ENCODE measurements at regions of chr17 and their contacts with region 1.

Region 1: GRCh38 chr17:35764123-35764991 is 3.7 kb downstream of the C17orf50 start:
- DNase-seq: peak; percentile 77 to 86 (median 84)
- H3K4me3 ChIP-seq: peak overlapping the region; percentile 70
- H3K4me3 Mint-ChIP-seq: peak overlapping the region; percentile 88 to 99 (median 96)
- H3K27ac ChIP-seq: peak overlapping the region; percentile 17
- H3K27ac Mint-ChIP-seq: peak overlapping the region; percentile 65 to 96 (median 86)
- H3K4me1 ChIP-seq: peaks cover 8% of the 10 kb centered on the region
- H3K4me1 Mint-ChIP-seq: peaks cover 7 to 9% (median 9%) of the 10 kb centered on the region in 3 donors
- H3K27me3 ChIP-seq: no peaks in the 10 kb centered on the region
- H3K27me3 Mint-ChIP-seq: no peaks in the 10 kb centered on the region

Region 2: GRCh38 chr17:35448214-35448898 is 316.0 kb before region 1 on chr17 and contains the start of gene SLFN13:
- CTCF ChIA-PET with region 1: no interaction called
- POLR2A ChIA-PET with region 1: no interaction called
- DNase-seq: peak; percentile 69 to 89 (median 80)
- H3K4me3 ChIP-seq: peak within 1 kb of the TSS; percentile 61
- H3K4me3 Mint-ChIP-seq: peak within 1 kb of the TSS; percentile 73 to 96 (median 88)
- H3K27ac ChIP-seq: peak within 1 kb of the TSS; percentile 41
- H3K27ac Mint-ChIP-seq: peak within 1 kb of the TSS; percentile 74 to 96 (median 90)
- H3K4me1 ChIP-seq: peaks cover 13% of the 10 kb centered on the region
- H3K4me1 Mint-ChIP-seq: peaks cover 14 to 28% (median 25%) of the 10 kb centered on the region in 3 donors
- H3K27me3 ChIP-seq: no peaks in the 10 kb centered on the region
- H3K27me3 Mint-ChIP-seq: no peaks in the 10 kb centered on the region
- total RNA-seq, gene SLFN13: 23.0 to 24.4 TPM

Region 3: GRCh38 chr17:35747540-35748017 is 16.8 kb before region 1 on chr17:
- CTCF ChIA-PET with region 1: interaction called, 42 read pairs
- POLR2A ChIA-PET with region 1: no interaction called
- DNase-seq: peak; percentile 64 to 83 (median 71)
- H3K4me3 ChIP-seq: no peak overlapping the region
- H3K4me3 Mint-ChIP-seq: no peak overlapping the region
- H3K27ac ChIP-seq: no peak overlapping the region
- H3K27ac Mint-ChIP-seq: peak overlapping the region in 1 of 8 donors; percentile 77
- H3K4me1 ChIP-seq: peaks cover 6% of the 10 kb centered on the region
- H3K4me1 Mint-ChIP-seq: peaks cover 4 to 18% (median 5%) of the 10 kb centered on the region in 3 donors
- H3K27me3 ChIP-seq: peaks cover 40% of the 10 kb centered on the region
- H3K27me3 Mint-ChIP-seq: peaks cover 49 to 58% of the 10 kb centered on the region in 2 donors

Region 4: GRCh38 chr17:35780951-35781350 is 16.6 kb after region 1 on chr17:
- CTCF ChIA-PET with region 1: interaction called, 25 read pairs
- POLR2A ChIA-PET with region 1: interaction called, 7 read pairs
- DNase-seq: no peak
- H3K4me3 ChIP-seq: no peak overlapping the region
- H3K4me3 Mint-ChIP-seq: no peak overlapping the region
- H3K27ac ChIP-seq: no peak overlapping the region
- H3K27ac Mint-ChIP-seq: no peak overlapping the region
- H3K4me1 ChIP-seq: no peaks in the 10 kb centered on the region
- H3K4me1 Mint-ChIP-seq: no peaks in the 10 kb centered on the region
- H3K27me3 ChIP-seq: no peaks in the 10 kb centered on the region
- H3K27me3 Mint-ChIP-seq: peaks cover 6 to 37% of the 10 kb centered on the region in 2 donors

Region 5: GRCh38 chr17:35788504-35789368 is 24.4 kb after region 1 on chr17:
- CTCF ChIA-PET with region 1: interaction called, 13 read pairs
- POLR2A ChIA-PET with region 1: no interaction called
- DNase-seq: no peak
- H3K4me3 ChIP-seq: peak overlapping the region; percentile 17
- H3K4me3 Mint-ChIP-seq: no peak overlapping the region
- H3K27ac ChIP-seq: no peak overlapping the region
- H3K27ac Mint-ChIP-seq: no peak overlapping the region
- H3K4me1 ChIP-seq: peaks cover 14% of the 10 kb centered on the region
- H3K4me1 Mint-ChIP-seq: no peaks in the 10 kb centered on the region
- H3K27me3 ChIP-seq: peaks cover 7% of the 10 kb centered on the region
- H3K27me3 Mint-ChIP-seq: peaks cover 12 to 21% of the 10 kb centered on the region in 2 donors

Region 6: DNA sequence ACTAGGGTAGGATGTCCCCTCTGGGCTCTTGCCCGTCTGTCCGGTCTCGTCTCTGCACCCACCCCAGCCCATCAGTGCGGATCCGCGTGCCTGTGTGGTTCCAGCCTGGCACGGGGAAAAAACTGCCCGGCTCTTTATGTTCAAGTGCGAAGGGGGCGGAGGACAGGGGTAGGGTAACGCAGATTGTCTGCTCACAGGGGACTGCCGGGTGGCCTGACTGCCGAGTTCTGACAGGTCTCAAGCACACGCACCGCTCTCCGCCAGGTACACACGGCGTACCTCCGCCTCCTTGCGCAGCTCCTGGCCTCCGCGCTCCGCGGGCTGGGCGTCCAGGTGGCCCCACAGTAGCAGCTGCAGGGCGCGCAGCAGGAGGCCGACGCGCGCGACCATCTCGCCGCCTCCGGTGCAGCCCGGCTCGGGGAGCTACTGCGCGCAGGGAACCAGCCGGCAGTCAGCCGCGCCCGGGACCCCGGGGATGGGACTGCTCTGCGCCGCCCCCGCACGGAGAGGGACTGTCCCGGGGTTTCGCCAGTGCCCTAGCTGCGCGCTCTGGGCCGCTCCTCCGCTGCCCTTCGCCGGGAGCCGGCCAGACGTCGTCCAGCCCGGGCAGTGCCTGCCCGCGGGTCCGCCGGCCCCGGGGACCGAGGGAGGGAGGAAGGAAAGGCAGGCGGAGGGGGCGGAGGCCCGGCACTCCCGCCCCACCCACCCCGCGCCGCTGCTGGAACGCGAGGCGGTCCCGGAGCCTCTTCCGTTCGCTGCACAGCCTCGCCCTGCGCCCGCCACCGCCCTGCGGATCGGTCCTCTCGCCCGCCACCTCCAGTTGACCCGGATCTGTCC is 30.8 kb after region 1 on chr17 and contains the start of gene MMP28:
- CTCF ChIA-PET with region 1: interaction called, 22 read pairs
- POLR2A ChIA-PET with region 1: interaction called, 3 read pairs
- DNase-seq: peak in 4 of 5 donors; percentile 1 to 57 (median 14)
- H3K4me3 ChIP-seq: peak within 1 kb of the TSS; percentile 58
- H3K4me3 Mint-ChIP-seq: peak within 1 kb of the TSS; percentile 55 to 87 (median 77)
- H3K27ac ChIP-seq: no peak within 1 kb of the TSS
- H3K27ac Mint-ChIP-seq: peak within 1 kb of the TSS in 1 of 8 donors; percentile 68
- H3K4me1 ChIP-seq: peaks cover 10% of the 10 kb centered on the region
- H3K4me1 Mint-ChIP-seq: peaks cover 5 to 17% (median 8%) of the 10 kb centered on the region in 3 donors
- H3K27me3 ChIP-seq: peaks cover 29% of the 10 kb centered on the region
- H3K27me3 Mint-ChIP-seq: peaks cover 39 to 65% of the 10 kb centered on the region in 2 donors
- total RNA-seq, gene MMP28: not detected

Region 7: GRCh38 chr17:35808962-35809854 is 44.9 kb after region 1 on chr17 and contains the start of gene TAF15:
- CTCF ChIA-PET with region 1: interaction called, 250 read pairs
- POLR2A ChIA-PET with region 1: interaction called, 66 read pairs
- DNase-seq: peak; percentile 94 to 97 (median 97)
- H3K4me3 ChIP-seq: peak within 1 kb of the TSS; percentile 83
- H3K4me3 Mint-ChIP-seq: peak within 1 kb of the TSS; percentile 90 to 99 (median 97)
- H3K27ac ChIP-seq: peak within 1 kb of the TSS; percentile 83
- H3K27ac Mint-ChIP-seq: peak within 1 kb of the TSS; percentile 90 to 99 (median 97)
- H3K4me1 ChIP-seq: peaks cover 44% of the 10 kb centered on the region
- H3K4me1 Mint-ChIP-seq: peaks cover 49 to 59% (median 49%) of the 10 kb centered on the region in 3 donors
- H3K27me3 ChIP-seq: no peaks in the 10 kb centered on the region
- H3K27me3 Mint-ChIP-seq: no peaks in the 10 kb centered on the region
- total RNA-seq, gene TAF15: 274 to 291 TPM

Region 8: GRCh38 chr17:35931794-35932425 is 167.6 kb after region 1 on chr17:
- CTCF ChIA-PET with region 1: no interaction called
- POLR2A ChIA-PET with region 1: no interaction called
- DNase-seq: no peak
- H3K4me3 ChIP-seq: no peak overlapping the region
- H3K4me3 Mint-ChIP-seq: peak overlapping the region in 1 of 7 donors; percentile 47
- H3K27ac ChIP-seq: no peak overlapping the region
- H3K27ac Mint-ChIP-seq: peak overlapping the region in 1 of 8 donors; percentile 58
- H3K4me1 ChIP-seq: peaks cover 6% of the 10 kb centered on the region
- H3K4me1 Mint-ChIP-seq: peaks cover 22 to 31% (median 26%) of the 10 kb centered on the region in 3 donors
- H3K27me3 ChIP-seq: no peaks in the 10 kb centered on the region
- H3K27me3 Mint-ChIP-seq: no peaks in the 10 kb centered on the region

Region 9: DNA sequence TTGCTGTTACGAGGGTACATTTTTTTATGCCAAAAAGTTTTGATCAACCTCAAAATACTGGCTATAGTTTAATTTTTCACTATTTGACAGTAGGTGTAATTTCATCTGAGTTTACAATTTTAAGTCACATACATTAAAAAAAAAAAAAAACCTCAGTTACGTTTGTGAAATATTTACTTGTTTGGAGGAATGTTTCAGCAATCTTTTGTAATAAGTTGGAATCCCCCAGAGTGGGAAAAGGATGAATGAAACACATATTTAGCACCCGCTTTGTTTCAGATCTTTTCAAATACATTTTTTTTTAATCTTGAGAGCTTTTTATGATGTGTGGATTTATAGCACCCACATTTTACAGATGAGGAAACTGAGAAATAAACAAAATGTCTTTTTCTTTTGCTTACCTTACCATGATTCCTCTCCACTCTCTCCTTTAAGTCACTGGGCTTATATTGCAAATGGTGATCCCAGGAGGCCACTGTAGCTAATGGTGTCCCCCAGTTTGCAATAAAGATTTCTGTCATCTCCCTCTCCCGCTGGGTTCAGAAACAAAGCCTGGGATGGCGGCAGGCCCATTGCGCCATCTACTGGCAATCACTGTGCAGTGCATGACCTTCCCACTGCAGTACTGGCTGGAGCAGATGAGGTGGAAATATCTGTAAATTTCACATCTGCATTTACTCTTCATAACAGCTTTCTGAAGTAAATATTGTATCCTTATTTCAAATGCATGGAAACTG is 384.4 kb after region 1 on chr17:
- CTCF ChIA-PET with region 1: interaction called, 21 read pairs
- POLR2A ChIA-PET with region 1: interaction called, 3 read pairs
- DNase-seq: peak; percentile 49 to 80 (median 67)
- H3K4me3 ChIP-seq: no peak overlapping the region
- H3K4me3 Mint-ChIP-seq: peak overlapping the region in 6 of 7 donors; percentile 22 to 84 (median 67)
- H3K27ac ChIP-seq: no peak overlapping the region
- H3K27ac Mint-ChIP-seq: peak overlapping the region in 5 of 8 donors; percentile 21 to 79 (median 55)
- H3K4me1 ChIP-seq: no peaks in the 10 kb centered on the region
- H3K4me1 Mint-ChIP-seq: peaks cover 4 to 43% (median 39%) of the 10 kb centered on the region in 3 donors
- H3K27me3 ChIP-seq: no peaks in the 10 kb centered on the region
- H3K27me3 Mint-ChIP-seq: peaks cover 5 to 9% of the 10 kb centered on the region in 2 donors